B cell (primary cell): ENCODE measurements at regions of chr19 and their contacts with region 1.

Region 1: DNA sequence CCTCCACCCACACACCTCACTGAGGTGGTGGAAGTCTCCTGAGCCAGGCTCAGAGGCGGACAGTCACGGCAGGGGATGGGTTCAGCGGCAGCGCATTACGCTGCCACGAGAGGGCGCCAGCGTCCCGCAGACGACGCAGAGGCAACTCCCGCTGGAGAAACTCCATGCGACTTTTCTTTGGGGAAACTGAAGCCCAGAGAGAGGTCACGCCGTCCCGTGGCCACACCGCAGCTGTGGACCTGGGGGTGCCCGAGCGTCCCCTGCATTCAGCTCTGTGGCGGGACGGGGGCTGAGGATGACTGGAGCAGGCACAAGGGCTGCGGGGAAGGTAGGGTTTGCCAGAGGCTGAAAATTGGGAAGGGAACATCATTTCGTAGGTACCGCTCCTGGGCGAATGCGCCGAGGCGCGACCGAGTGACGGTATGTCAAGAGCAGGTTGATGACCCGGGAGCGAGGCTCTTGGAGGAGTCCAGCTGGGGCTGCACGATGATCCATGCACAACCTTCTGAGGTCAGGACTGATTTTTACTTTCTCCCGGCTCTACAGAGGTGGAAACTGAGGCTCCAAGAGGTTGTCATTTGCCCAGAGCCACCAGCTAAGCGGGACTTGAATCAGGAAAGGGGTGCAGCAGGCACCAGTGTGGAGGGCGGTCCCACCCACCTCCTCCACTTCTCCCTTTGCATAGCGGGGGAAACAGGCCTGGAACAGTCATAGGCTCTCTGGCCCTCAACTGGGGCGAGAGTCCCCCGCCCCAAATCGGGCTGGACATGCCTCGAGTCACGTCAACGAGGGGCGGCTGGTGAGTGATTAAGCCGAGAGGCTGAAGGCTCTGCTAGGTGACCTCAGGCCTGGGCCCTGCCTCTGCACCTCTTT is 690 bp upstream of the ARRDC2 start:
- DNase-seq: peak; percentile 91
- ATAC-seq: peak; percentile 59
- H3K4me3 ChIP-seq: peak overlapping the region; percentile 31 to 68 (median 56)
- H3K4me3 Mint-ChIP-seq: peak overlapping the region; percentile 98
- H3K27ac ChIP-seq: peak overlapping the region; percentile 90 to 93
- H3K27ac Mint-ChIP-seq: peak overlapping the region; percentile 94
- H3K4me1 ChIP-seq: peaks cover 30 to 41% of the 10 kb centered on the region in 2 donors
- H3K4me1 Mint-ChIP-seq: peaks cover 42% of the 10 kb centered on the region
- H3K27me3 ChIP-seq: no peaks in the 10 kb centered on the region
- H3K27me3 Mint-ChIP-seq: no peaks in the 10 kb centered on the region
- CTCF ChIP-seq: peak; percentile 100

Region 2: DNA sequence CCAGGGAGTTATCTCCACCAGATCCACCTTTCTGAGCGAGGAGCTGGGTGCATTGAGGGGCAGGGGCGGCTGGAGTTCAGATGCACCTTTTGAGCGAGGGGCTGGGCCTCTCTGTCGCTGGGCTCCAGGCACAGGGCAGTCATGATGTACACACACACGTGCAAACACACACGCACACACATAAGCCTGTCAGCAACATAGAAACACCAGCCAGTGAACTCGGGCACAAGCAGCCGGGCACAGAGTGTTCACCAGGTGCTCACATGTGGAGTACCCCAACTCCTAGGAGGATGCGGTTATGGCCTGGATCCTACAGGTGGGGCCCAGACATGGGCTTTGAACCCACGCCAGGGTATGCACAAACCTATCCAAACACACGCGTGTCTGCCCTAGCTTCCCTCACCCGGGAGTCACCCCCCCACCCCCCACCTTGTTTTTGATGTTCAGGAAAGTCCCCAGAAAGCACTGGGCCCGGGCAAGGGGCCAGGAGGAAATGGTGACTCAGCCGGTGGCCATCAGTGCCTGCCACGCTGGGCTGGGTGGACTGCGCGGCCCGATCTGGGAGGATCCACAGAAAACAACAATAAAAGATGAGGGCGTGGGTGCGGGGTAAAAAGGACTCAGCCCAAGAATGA is 14.0 kb after region 1 on chr19:
- CTCF ChIA-PET with region 1: interaction called, 27 read pairs
- POLR2A ChIA-PET with region 1: interaction called, 137 read pairs
- intact Hi-C with region 1: loop called (anchors 1 kb)
- DNase-seq: peak; percentile 84
- ATAC-seq: peak; percentile 22
- H3K4me3 ChIP-seq: peak overlapping the region in 2 of 5 experiments; percentile 18 to 35
- H3K4me3 Mint-ChIP-seq: peak overlapping the region; percentile 79
- H3K27ac ChIP-seq: peak overlapping the region; percentile 95 to 99
- H3K27ac Mint-ChIP-seq: peak overlapping the region; percentile 98
- H3K4me1 ChIP-seq: peaks cover 51 to 64% of the 10 kb centered on the region in 2 donors
- H3K4me1 Mint-ChIP-seq: peaks cover 68% of the 10 kb centered on the region
- H3K27me3 ChIP-seq: no peaks in the 10 kb centered on the region
- H3K27me3 Mint-ChIP-seq: no peaks in the 10 kb centered on the region
- CTCF ChIP-seq: no peak

Region 3: GRCh38 chr19:18044825-18045304 is 37.6 kb after region 1 on chr19:
- CTCF ChIA-PET with region 1: interaction called, 62 read pairs
- POLR2A ChIA-PET with region 1: interaction called, 45 read pairs
- intact Hi-C with region 1: loop called (anchors 1 kb)
- DNase-seq: peak; percentile 93
- ATAC-seq: peak; percentile 91
- H3K4me3 ChIP-seq: peak overlapping the region in 4 of 5 experiments; percentile 20 to 52 (median 36)
- H3K4me3 Mint-ChIP-seq: peak overlapping the region; percentile 85
- H3K27ac ChIP-seq: peak overlapping the region; percentile 80 to 91
- H3K27ac Mint-ChIP-seq: peak overlapping the region; percentile 97
- H3K4me1 ChIP-seq: peaks cover 38 to 55% of the 10 kb centered on the region in 2 donors
- H3K4me1 Mint-ChIP-seq: peaks cover 52% of the 10 kb centered on the region
- H3K27me3 ChIP-seq: no peaks in the 10 kb centered on the region
- H3K27me3 Mint-ChIP-seq: no peaks in the 10 kb centered on the region
- CTCF ChIP-seq: no peak

Region 4: DNA sequence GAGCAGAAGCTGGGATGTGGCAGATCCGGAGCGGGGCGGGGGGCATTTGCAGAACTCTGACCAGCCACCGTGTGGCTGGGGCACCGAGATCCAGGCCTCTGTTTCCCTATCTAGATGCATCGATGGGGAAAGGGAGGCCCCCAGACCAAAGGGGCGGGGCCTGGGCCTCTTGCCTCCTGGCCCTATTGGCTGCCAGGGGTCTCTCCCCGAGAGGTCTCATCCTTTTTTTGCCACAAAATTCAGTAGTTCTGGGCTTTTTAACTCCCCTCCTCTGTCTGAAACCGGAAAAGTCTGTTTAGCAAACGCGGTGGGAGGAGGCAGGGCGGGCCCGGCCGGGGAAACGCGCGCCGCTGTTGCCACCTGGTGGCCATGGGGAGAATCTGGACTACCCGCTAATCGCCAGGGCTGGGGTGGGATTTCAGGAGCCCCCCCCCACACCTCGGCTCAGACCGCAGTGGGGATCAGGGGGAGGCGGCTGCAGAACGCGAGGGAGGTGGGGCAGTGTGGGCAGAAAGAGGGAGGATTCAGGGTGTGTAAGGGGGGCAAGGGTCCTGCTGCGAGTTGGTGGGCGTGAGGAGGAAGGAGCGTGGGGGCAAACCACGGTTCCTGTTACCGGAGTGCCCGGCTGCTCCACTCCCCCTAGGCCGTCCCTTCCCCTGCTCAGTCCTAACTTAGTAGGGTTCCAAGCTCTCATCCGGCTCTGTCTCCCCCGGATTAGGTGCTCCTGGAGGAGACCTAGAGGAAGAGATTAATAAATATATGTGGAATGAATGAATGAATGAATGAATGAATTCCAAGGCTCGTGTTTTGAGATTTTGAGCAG is 51.1 kb after region 1 on chr19:
- CTCF ChIA-PET with region 1: interaction called, 345 read pairs
- POLR2A ChIA-PET with region 1: interaction called, 37 read pairs
- intact Hi-C with region 1: loop called (anchors 1 kb)
- DNase-seq: peak; percentile 90
- ATAC-seq: peak; percentile 96
- H3K4me3 ChIP-seq: peak overlapping the region in 3 of 5 experiments; percentile 21 to 23 (median 23)
- H3K4me3 Mint-ChIP-seq: peak overlapping the region; percentile 65
- H3K27ac ChIP-seq: peak overlapping the region; percentile 67 to 71
- H3K27ac Mint-ChIP-seq: peak overlapping the region; percentile 89
- H3K4me1 ChIP-seq: peaks cover 11 to 13% of the 10 kb centered on the region in 2 donors
- H3K4me1 Mint-ChIP-seq: peaks cover 20% of the 10 kb centered on the region
- H3K27me3 ChIP-seq: no peaks in the 10 kb centered on the region
- H3K27me3 Mint-ChIP-seq: no peaks in the 10 kb centered on the region
- CTCF ChIP-seq: peak; percentile 96

Region 5: GRCh38 chr19:18109733-18110595 is 102.7 kb after region 1 on chr19:
- CTCF ChIA-PET with region 1: interaction called, 10 read pairs
- POLR2A ChIA-PET with region 1: interaction called, 7 read pairs
- intact Hi-C with region 1: loop called (anchors 2 kb)
- DNase-seq: peak; percentile 61
- ATAC-seq: peak; percentile 48
- H3K4me3 ChIP-seq: peak overlapping the region; percentile 22 to 71 (median 64)
- H3K4me3 Mint-ChIP-seq: peak overlapping the region; percentile 79
- H3K27ac ChIP-seq: peak overlapping the region; percentile 49 to 82
- H3K27ac Mint-ChIP-seq: peak overlapping the region; percentile 84
- H3K4me1 ChIP-seq: peaks cover 53 to 65% of the 10 kb centered on the region in 2 donors
- H3K4me1 Mint-ChIP-seq: peaks cover 65% of the 10 kb centered on the region
- H3K27me3 ChIP-seq: no peaks in the 10 kb centered on the region
- H3K27me3 Mint-ChIP-seq: no peaks in the 10 kb centered on the region
- CTCF ChIP-seq: no peak

Region 6: GRCh38 chr19:18152444-18152816 is 145.2 kb after region 1 on chr19:
- CTCF ChIA-PET with region 1: interaction called, 11 read pairs
- POLR2A ChIA-PET with region 1: interaction called, 6 read pairs
- intact Hi-C with region 1: no loop called
- DNase-seq: peak; percentile 100
- ATAC-seq: peak; percentile 71
- H3K4me3 ChIP-seq: peak overlapping the region; percentile 63 to 88 (median 70)
- H3K4me3 Mint-ChIP-seq: peak overlapping the region; percentile 89
- H3K27ac ChIP-seq: peak overlapping the region; percentile 90 to 93
- H3K27ac Mint-ChIP-seq: peak overlapping the region; percentile 95
- H3K4me1 ChIP-seq: peaks cover 14 to 25% of the 10 kb centered on the region in 2 donors
- H3K4me1 Mint-ChIP-seq: peaks cover 23% of the 10 kb centered on the region
- H3K27me3 ChIP-seq: no peaks in the 10 kb centered on the region
- H3K27me3 Mint-ChIP-seq: no peaks in the 10 kb centered on the region
- CTCF ChIP-seq: peak; percentile 88